ENCODE measurements at regions of chr16 and their contacts with region 1.

Region 1: DNA sequence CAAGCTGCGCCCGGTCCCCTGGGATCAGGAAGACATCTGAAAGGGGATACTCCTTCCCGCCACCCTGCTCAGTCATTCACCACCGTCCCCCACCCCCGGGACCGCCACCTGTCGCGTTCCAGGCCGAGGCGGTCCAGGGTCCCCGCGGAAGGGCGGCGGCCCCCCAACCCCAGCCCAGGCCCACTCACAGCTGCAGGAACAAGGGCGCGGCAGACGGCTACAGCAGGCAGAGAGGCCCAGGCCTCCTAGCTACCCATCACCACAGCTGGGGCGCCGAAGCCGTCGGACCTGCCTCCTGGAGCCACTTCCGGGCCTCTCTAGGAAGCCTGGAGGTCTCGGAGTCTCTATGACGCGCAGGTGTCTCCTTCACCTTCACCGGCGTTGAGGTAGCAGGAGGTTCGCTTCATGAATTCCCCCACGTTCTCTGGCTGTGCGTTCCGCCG is at the start of gene SDR42E1:
- DNase-seq: peak; percentile 63 to 81
- H3K4me3 ChIP-seq: peak within 1 kb of the TSS; percentile 84
- H3K27ac ChIP-seq: no peak within 1 kb of the TSS
- H3K4me1 ChIP-seq: no peaks in the 10 kb centered on the region
- H3K27me3 ChIP-seq: peaks cover 7% of the 10 kb centered on the region
- CTCF ChIP-seq: no peak
- total RNA-seq, gene SDR42E1: 10.5 and 11.6 TPM in 2 replicates

Region 2: DNA sequence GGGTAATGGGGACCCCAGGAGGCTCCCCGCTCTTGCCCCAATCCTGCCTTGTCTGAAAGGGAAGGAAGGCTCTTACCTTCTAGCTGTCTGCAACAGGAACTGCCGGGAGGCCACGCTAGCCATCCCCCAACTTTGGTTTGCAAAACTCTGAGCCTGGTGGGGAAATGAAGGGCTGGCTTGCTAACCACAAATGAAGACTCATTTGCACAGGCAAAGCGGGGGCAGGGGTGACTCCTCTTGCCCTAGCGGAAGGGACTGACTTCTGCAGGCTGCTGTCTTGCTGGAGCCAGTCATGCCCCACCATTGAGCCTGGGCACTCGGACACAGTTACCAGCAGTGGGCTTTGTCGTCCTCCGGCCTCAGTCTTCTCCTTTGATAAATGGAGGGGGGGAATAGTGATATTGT is 179.5 kb before region 1 on chr16:
- CTCF ChIA-PET with region 1: no interaction called
- POLR2A ChIA-PET with region 1: no interaction called
- intact Hi-C with region 1: no loop called
- DNase-seq: no peak
- H3K4me3 ChIP-seq: no peak overlapping the region
- H3K27ac ChIP-seq: no peak overlapping the region
- H3K4me1 ChIP-seq: no peaks in the 10 kb centered on the region; the same call in 1 of the 2 replicates
- H3K27me3 ChIP-seq: no peaks in the 10 kb centered on the region
- CTCF ChIP-seq: no peak

Region 3: GRCh38 chr16:82169861-82170845 is 158.9 kb after region 1 on chr16 and contains the start of gene MPHOSPH6:
- CTCF ChIA-PET with region 1: no interaction called
- POLR2A ChIA-PET with region 1: no interaction called
- intact Hi-C with region 1: loop called (anchors 5 kb)
- DNase-seq: peak; percentile 76 to 84
- H3K4me3 ChIP-seq: peak within 1 kb of the TSS; percentile 97
- H3K27ac ChIP-seq: no peak within 1 kb of the TSS
- H3K4me1 ChIP-seq: peaks cover 7% of the 10 kb centered on the region; the same call in 1 of the 2 replicates
- H3K27me3 ChIP-seq: peaks cover 33% of the 10 kb centered on the region
- CTCF ChIP-seq: no peak
- total RNA-seq, gene MPHOSPH6: 11.6 and 15.2 TPM in 2 replicates